Astrocyte of the cerebellum (primary cell): ENCODE measurements at regions of chr18 and their contacts with region 1.

Region 1: DNA sequence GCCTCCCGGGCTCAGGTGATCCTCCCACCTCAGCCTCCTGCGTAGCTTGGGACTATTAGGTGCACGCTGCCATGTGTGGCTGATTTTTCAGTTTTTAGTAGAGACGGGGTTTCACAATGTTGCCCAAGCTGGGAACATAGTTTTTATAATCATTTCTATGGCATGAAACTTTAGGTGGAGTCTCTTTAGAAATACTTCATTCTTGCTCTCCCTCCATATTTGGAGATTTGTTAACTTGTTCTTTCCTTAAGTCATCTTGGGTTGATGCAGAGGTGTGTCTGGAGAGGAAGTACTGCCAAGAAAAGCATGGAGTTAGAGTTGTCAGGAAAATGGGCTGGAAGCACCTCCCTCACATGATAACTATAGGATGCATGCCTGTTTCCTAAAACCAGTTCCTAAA is 17.4 kb downstream of the ZNF532 start:
- DNase-seq: no peak
- H3K4me3 ChIP-seq: no peak overlapping the region
- CTCF ChIP-seq: no peak

Region 2: DNA sequence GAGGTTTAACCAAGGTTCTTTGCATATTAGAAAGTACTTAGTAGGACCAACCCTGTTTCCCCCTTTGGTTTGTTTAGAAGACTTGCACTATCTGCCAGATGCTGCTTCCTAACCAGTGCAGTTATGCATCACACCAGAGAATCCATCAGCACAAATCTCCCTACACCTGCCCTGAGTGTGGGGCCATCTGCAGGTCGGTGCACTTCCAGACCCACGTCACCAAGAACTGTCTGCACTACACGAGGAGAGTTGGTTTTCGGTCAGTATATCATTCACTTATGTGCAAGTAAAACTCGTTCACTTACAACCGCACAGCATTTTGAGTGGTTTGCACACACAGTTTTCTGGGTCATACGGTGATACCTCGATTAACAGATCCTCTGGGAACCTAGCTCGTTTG is 52.3 kb after region 1 on chr18:
- in situ Hi-C with region 1: loop called (anchors 5 kb)
- DNase-seq: no peak
- H3K4me3 ChIP-seq: no peak overlapping the region
- CTCF ChIP-seq: no peak